Activated naive CD8-positive, alpha-beta T cell treated with anti-CD3 and anti-CD28 coated beads, Interleukin-2, amount 10 ng/mL, durations not matched to agents 7 days and 5 days (primary cell): ENCODE measurements at regions of chr12 and their contacts with region 1.

Region 1: GRCh38 chr12:9673404-9674225 is 4.1 kb downstream of the CLEC2D start:
- DNase-seq: peak; percentile 74
- ATAC-seq: peak; percentile 39
- H3K4me3 Mint-ChIP-seq: peak overlapping the region; percentile 95
- H3K27ac Mint-ChIP-seq: peak overlapping the region; percentile 99
- H3K4me1 Mint-ChIP-seq: peaks cover 62% of the 10 kb centered on the region
- H3K27me3 Mint-ChIP-seq: no peaks in the 10 kb centered on the region

Region 2: GRCh38 chr12:9604287-9604686 is 69.3 kb before region 1 on chr12:
- POLR2A ChIA-PET with region 1: no interaction called
- DNase-seq: no peak
- ATAC-seq: no peak
- H3K4me3 Mint-ChIP-seq: no peak overlapping the region
- H3K27ac Mint-ChIP-seq: no peak overlapping the region
- H3K4me1 Mint-ChIP-seq: peaks cover 8% of the 10 kb centered on the region
- H3K27me3 Mint-ChIP-seq: no peaks in the 10 kb centered on the region

Region 3: DNA sequence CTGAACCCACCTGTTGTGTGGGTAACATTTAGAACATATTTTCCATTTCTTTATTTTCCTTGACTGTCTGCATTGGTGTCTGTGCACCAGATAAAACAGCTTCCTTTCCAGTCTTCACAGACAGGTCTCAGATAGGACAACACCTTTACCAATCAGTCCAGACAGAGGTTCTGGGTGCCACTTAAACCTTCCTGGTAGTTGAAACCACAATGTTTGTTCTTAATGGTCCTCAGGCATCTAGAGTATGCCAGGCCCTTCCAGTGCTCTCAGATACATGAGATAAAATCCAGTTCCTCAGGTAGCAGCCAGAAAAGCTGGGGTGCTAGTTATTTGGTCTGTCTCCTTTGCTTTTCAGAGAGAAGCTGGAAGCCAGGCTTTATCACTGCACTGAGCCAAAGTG is 11.1 kb before region 1 on chr12:
- POLR2A ChIA-PET with region 1: interaction called, 499 read pairs
- DNase-seq: no peak
- ATAC-seq: peak; percentile 48
- H3K4me3 Mint-ChIP-seq: peak overlapping the region; percentile 42
- H3K27ac Mint-ChIP-seq: peak overlapping the region; percentile 48
- H3K4me1 Mint-ChIP-seq: peaks cover 61% of the 10 kb centered on the region
- H3K27me3 Mint-ChIP-seq: no peaks in the 10 kb centered on the region

Region 4: DNA sequence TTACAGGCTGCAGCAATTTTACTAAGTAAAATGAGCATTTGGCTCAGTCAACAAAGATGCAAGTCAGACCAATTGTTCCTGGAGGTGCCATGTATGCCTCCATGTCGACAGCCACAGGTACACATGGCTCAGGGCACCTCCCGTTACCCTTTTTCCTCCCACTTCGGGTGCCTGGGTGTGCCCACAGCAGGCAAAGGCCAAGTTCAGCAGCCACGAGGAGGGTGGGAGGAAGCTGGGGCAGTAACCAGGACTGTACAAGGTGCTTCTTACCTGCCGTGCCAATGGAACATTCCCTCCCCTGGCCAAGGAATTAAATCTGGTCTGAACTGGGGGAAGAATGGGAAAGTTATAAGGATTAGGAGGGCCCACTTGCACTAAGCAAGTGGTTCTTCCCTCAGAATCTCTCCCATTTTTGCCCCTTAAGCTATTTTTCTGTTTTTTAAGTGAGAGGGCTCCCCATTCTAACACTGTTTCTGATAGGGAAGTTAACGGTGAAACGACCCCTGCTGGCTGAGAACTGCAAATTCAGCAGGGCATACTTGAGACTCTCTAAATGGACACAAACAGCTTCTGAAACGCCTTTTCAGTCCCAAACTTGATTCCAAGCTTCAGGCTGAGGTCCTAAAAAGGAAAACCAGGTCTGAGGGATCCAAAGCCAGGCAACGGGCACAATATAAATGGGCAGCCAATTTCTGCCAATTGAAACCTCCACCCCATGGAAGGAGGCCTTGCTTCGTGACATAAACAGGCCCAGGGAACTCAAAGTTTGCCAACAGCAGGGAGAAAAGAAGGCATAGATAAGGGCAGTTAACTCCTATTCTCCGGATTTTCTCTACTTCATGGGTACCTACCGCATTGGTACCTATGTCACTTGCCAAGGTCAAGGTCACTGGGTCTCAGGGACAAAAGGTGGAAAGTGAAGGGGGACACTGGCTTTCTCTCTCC is 34.5 kb after region 1 on chr12:
- POLR2A ChIA-PET with region 1: interaction called, 30 read pairs
- DNase-seq: peak; percentile 67
- ATAC-seq: peak; percentile 76
- H3K4me3 Mint-ChIP-seq: peak overlapping the region; percentile 79
- H3K27ac Mint-ChIP-seq: peak overlapping the region; percentile 82
- H3K4me1 Mint-ChIP-seq: peaks cover 38% of the 10 kb centered on the region
- H3K27me3 Mint-ChIP-seq: no peaks in the 10 kb centered on the region